Mammary epithelial cell (primary cell): ENCODE measurements at regions of chr6 and their contacts with region 1.

Region 1: DNA sequence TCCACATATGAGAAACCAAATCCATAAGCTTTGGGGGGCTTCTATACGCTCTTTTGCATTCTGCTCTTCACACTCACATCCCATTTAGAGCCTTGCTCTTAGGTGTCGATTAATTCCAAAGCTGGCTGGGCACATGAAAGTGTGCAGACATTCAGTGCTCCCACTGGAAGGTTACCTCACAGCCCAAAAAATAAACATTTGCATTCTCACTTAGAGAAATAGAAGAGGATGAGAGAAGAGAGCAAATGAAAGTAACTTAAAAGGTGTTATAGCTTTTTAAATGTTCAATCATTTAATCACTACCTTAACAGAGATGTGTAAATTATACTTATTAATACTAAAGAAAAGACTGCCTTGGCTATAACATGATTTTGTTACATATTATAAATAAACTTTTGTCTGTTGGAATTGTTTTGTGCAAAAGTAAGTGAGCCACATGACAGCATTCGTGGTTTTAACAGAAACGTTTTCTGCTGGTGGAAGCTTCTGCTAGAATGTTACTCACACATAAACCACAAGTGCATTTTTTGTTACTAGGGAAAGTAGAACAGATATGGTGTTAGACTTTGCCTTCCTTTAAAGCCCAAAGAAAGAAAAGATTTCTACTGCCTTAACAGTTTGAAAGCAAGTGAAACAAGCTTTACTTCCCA is 116.7 kb downstream of the SIM1 start:
- DNase-seq: peak; percentile 57
- H3K4me3 ChIP-seq: no peak overlapping the region
- H3K27ac ChIP-seq: no peak overlapping the region
- H3K4me1 ChIP-seq: peaks cover 17% of the 10 kb centered on the region
- H3K27me3 ChIP-seq: no peaks in the 10 kb centered on the region
- CTCF ChIP-seq: no peak

Region 2: GRCh38 chr6:100464903-100465700 is 117.1 kb after region 1 on chr6 and contains the start of gene SIM1:
- CTCF ChIA-PET with region 1: no interaction called
- dilution Hi-C with region 1: no loop called
- in situ Hi-C with region 1: no loop called
- intact Hi-C with region 1: loop called (anchors 5 kb)
- DNase-seq: peak; percentile 53
- H3K4me3 ChIP-seq: peak within 1 kb of the TSS in 2 of 3 experiments; percentile 19 to 38
- H3K27ac ChIP-seq: no peak within 1 kb of the TSS
- H3K4me1 ChIP-seq: peaks cover 11% of the 10 kb centered on the region
- H3K27me3 ChIP-seq: peaks cover 83% of the 10 kb centered on the region
- CTCF ChIP-seq: no peak
- total RNA-seq, gene SIM1: under 0.01 TPM in 1 of 2 donors, not detected in the other